Posterior cingulate gyrus (tissue), 11 donors: ENCODE measurements at regions of chr14 and their contacts with region 1.

Region 1: GRCh38 chr14:51283402-51284085 is 43.5 kb downstream of the TMX1 start:
- DNase-seq: no peak

Region 2: DNA sequence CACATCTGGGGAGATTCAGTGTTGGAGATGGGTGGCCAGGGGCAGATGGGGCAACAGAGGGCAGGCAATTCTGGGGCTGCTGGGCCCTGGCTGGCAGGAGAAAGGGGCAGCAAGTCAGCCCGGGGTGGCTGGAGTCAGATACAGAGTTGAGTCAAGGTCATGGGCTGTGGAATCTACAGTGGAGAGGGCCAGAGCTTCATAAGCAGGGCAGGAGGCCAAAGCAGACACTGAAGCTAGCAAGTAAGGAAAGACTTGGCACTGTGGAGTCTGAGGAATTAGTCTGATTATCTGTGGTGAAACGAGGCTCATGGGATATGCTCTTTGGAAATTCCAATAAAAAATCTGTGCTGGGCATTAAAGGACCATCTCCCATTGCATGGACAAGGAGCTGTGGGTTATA is 52.0 kb after region 1 on chr14:
- intact Hi-C with region 1: no loop called
- DNase-seq: peak in 1 of 10 donors; percentile 36

Region 3: DNA sequence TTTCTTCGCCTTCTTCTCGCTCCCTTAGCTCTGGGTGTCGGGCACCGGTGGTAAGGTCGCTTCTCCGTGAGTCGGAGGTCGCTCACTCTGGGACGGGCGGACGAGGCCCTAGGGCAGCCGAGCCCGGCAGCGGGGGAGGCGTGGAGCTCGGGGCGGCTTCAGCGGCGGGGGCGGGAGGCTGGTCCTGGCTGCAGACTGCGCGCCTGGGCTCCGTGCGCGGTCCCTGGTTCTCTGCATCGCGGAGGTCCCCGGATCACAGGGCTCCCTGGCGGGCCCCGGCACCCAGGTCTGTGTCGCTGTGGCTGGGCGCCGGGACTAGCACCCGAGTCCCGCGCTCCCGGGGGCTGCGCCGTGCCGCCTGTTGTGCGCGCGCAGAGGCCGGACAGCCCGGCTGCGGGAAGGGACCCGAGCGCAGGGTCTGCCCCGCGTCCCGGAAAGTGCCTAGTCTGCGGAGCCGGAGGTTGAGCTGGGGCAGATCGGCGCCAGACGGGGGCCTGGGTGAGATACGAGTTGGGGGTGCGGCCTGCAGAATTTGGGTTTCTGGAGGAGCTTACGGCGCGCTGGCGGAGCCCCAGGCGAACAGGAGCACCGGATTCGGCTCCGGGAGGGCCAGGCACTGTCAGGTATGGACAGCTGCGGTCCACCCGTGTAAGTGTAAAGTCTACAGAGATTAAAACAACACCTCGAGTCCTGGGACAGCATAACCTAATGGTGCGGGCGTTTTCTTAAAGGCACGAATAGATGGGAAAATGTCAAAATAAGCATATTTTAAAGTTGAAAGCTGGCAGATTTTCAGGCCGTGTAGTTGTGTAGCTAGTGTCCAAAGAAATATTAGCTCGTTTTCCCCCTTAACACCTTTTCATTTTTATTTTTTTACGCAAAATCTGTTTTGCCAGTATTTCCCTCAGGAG is 368.9 kb after region 1 on chr14:
- intact Hi-C with region 1: loop called (anchors 1 kb)
- DNase-seq: peak in 9 of 10 donors; percentile 29 to 90 (median 49)

Region 4: GRCh38 chr14:51979088-51979709 is 695.7 kb after region 1 on chr14:
- intact Hi-C with region 1: loop called (anchors 10 kb)
- DNase-seq: peak; percentile 62 to 97 (median 88)